Ovary (tissue), 10 donors: ENCODE measurements at regions of chr15 and their contacts with region 1.

Region 1: GRCh38 chr15:89129123-89129815 is 41.0 kb downstream of the ABHD2 start:
- DNase-seq: peak; percentile 32 to 65 (median 57)
- H3K4me3 ChIP-seq: no peak overlapping the region
- H3K27ac ChIP-seq: no peak overlapping the region
- H3K4me1 ChIP-seq: no peaks in the 10 kb centered on the region
- H3K27me3 ChIP-seq: no peaks in the 10 kb centered on the region
- CTCF ChIP-seq: peak; percentile 23 to 36 (median 23)
- EP300 ChIP-seq: no peak
- POLR2A ChIP-seq: no peak

Region 2: DNA sequence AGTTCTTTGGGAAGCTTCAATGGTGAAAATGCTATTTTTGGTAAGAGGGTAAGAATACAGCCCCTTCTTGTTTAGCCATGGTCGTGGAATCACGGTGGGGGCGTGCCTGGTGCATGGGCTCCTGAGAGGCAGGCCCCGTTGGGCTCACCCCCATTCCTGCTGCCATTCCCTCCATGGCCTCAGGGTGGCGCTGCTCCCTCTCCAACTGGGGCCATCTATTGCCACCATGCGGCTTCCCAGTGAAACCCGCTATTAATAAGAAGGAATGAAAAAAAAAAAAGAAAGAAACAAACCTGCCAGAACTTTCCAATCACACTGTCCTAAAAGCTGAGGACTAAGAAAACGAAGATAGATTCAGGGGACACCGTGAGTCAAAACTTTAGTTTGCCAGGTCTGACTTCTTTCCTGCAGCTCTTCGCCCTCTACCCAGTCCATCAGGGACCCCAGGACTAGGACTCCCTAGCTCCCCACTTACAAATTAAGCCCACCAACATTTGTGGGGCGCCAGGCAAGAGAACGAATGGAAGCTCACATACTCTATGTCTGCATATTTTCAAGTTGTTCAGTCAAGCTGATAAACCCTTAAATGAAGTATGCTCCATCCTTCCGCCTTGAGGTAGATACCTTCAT is 71.7 kb before region 1 on chr15:
- intact Hi-C with region 1: loop called in 2 of 4 experiments (anchors 5 to 10 kb)
- DNase-seq: peak; percentile 72 to 91 (median 84)
- H3K4me3 ChIP-seq: no peak overlapping the region
- H3K27ac ChIP-seq: no peak overlapping the region
- H3K4me1 ChIP-seq: no peaks in the 10 kb centered on the region
- H3K27me3 ChIP-seq: no peaks in the 10 kb centered on the region
- CTCF ChIP-seq: peak; percentile 89 to 95 (median 93)
- EP300 ChIP-seq: no peak
- POLR2A ChIP-seq: no peak

Region 3: GRCh38 chr15:89665449-89666181 is 536.3 kb after region 1 on chr15:
- intact Hi-C with region 1: no loop called
- DNase-seq: peak; percentile 61 to 80 (median 73)
- H3K4me3 ChIP-seq: peak overlapping the region; percentile 39
- H3K27ac ChIP-seq: peak overlapping the region; percentile 79 to 96
- H3K4me1 ChIP-seq: peaks cover 7% of the 10 kb centered on the region
- H3K27me3 ChIP-seq: no peaks in the 10 kb centered on the region
- CTCF ChIP-seq: no peak
- EP300 ChIP-seq: no peak
- POLR2A ChIP-seq: no peak